B cell (primary cell): ENCODE measurements at regions of chr3 and their contacts with region 1.

Region 1: DNA sequence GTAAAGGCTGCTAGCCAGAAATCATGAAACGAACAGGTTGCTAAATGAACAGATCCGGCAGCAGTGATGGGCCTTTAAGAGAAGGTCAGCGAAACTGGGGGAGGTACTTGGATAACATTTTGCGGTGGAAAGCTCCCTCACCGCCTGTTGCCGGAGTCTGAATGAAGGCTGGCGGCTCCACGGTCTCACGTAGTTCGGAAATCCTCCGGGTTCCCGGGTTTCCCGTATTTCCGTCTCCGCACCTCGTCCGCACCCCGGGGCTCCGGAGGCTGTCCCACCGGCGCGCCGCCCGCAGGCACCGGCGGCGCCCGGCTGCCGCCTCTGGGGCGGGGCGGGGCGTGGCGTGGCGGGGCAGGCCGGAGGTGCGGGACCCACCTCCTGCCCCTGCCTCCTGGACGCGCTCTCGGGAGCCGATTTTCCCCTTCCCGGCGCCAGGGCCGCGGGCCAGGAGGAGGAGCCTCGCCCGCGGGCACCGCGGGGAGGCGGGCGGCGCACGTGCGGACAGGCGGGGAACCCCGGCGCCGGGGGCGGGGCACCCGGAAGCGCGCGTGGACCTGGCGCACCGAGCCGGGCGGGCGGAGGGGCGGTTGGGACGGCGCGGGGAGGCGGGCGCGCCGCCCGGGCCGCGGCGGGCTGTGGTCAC is at the start of gene ZDHHC23:
- DNase-seq: peak; percentile 88
- ATAC-seq: peak; percentile 84
- H3K4me3 ChIP-seq: peak within 1 kb of the TSS; percentile 47 to 89 (median 84)
- H3K4me3 Mint-ChIP-seq: peak within 1 kb of the TSS; percentile 87
- H3K27ac ChIP-seq: peak within 1 kb of the TSS; percentile 48 to 74
- H3K27ac Mint-ChIP-seq: peak within 1 kb of the TSS; percentile 89
- H3K4me1 ChIP-seq: peaks cover 12 to 14% of the 10 kb centered on the region in 2 donors
- H3K4me1 Mint-ChIP-seq: peaks cover 18% of the 10 kb centered on the region
- H3K27me3 ChIP-seq: no peaks in the 10 kb centered on the region
- H3K27me3 Mint-ChIP-seq: no peaks in the 10 kb centered on the region
- CTCF ChIP-seq: no peak
- total RNA-seq, gene ZDHHC23: 72.6 and 75.1 TPM in 2 replicates

Region 2: GRCh38 chr3:112568642-112569041 is 1378.9 kb before region 1 on chr3:
- CTCF ChIA-PET with region 1: no interaction called
- POLR2A ChIA-PET with region 1: no interaction called
- intact Hi-C with region 1: no loop called
- DNase-seq: no peak
- ATAC-seq: no peak
- H3K4me3 ChIP-seq: no peak overlapping the region
- H3K4me3 Mint-ChIP-seq: no peak overlapping the region
- H3K27ac ChIP-seq: no peak overlapping the region
- H3K27ac Mint-ChIP-seq: no peak overlapping the region
- H3K4me1 ChIP-seq: peaks cover 4 to 5% of the 10 kb centered on the region in 2 donors
- H3K4me1 Mint-ChIP-seq: peaks cover 16% of the 10 kb centered on the region
- H3K27me3 ChIP-seq: no peaks in the 10 kb centered on the region
- H3K27me3 Mint-ChIP-seq: no peaks in the 10 kb centered on the region
- CTCF ChIP-seq: no peak

Region 3: GRCh38 chr3:113985541-113985940 is 38.0 kb after region 1 on chr3:
- CTCF ChIA-PET with region 1: interaction called, 4 read pairs
- POLR2A ChIA-PET with region 1: no interaction called
- intact Hi-C with region 1: loop called (anchors 2 kb)
- DNase-seq: peak; percentile 84
- ATAC-seq: peak; percentile 94
- H3K4me3 ChIP-seq: peak overlapping the region in 4 of 5 experiments; percentile 4 to 34 (median 5)
- H3K4me3 Mint-ChIP-seq: peak overlapping the region; percentile 79
- H3K27ac ChIP-seq: peak overlapping the region; percentile 97 to 98
- H3K27ac Mint-ChIP-seq: peak overlapping the region; percentile 98
- H3K4me1 ChIP-seq: peaks cover 39 to 43% of the 10 kb centered on the region in 2 donors
- H3K4me1 Mint-ChIP-seq: peaks cover 58% of the 10 kb centered on the region
- H3K27me3 ChIP-seq: no peaks in the 10 kb centered on the region
- H3K27me3 Mint-ChIP-seq: no peaks in the 10 kb centered on the region
- CTCF ChIP-seq: no peak